Mammary epithelial cell (primary cell): ENCODE measurements at regions of chr17 and their contacts with region 1.

Region 1: GRCh38 chr17:41811549-41812380 is at the start of gene P3H4:
- DNase-seq: peak; percentile 79
- H3K4me3 ChIP-seq: peak within 1 kb of the TSS; percentile 66 to 81 (median 69)
- H3K27ac ChIP-seq: peak within 1 kb of the TSS; percentile 61
- H3K4me1 ChIP-seq: peaks cover 25% of the 10 kb centered on the region
- H3K27me3 ChIP-seq: no peaks in the 10 kb centered on the region
- CTCF ChIP-seq: peak; percentile 39 to 79
- total RNA-seq, gene P3H4: 30.5 to 42.3 TPM

Region 2: GRCh38 chr17:41717408-41718286 is 94.1 kb before region 1 on chr17:
- CTCF ChIA-PET with region 1: no interaction called
- dilution Hi-C with region 1: loop called (anchors 5 kb)
- in situ Hi-C with region 1: no loop called
- intact Hi-C with region 1: no loop called
- DNase-seq: peak; percentile 85
- H3K4me3 ChIP-seq: peak overlapping the region in 2 of 3 experiments; percentile 2 to 6
- H3K27ac ChIP-seq: peak overlapping the region; percentile 67
- H3K4me1 ChIP-seq: peaks cover 16% of the 10 kb centered on the region
- H3K27me3 ChIP-seq: no peaks in the 10 kb centered on the region
- CTCF ChIP-seq: no peak

Region 3: GRCh38 chr17:41786227-41787020 is 25.3 kb before region 1 on chr17 and contains the start of gene JUP:
- CTCF ChIA-PET with region 1: interaction called, 10 read pairs
- dilution Hi-C with region 1: no loop called
- in situ Hi-C with region 1: no loop called
- intact Hi-C with region 1: no loop called
- DNase-seq: peak; percentile 100
- H3K4me3 ChIP-seq: peak within 1 kb of the TSS; percentile 71 to 76 (median 75)
- H3K27ac ChIP-seq: peak within 1 kb of the TSS; percentile 99
- H3K4me1 ChIP-seq: peaks cover 47% of the 10 kb centered on the region
- H3K27me3 ChIP-seq: no peaks in the 10 kb centered on the region
- CTCF ChIP-seq: peak; percentile 43 to 49
- total RNA-seq, gene JUP: 444 to 578 TPM

Region 4: DNA sequence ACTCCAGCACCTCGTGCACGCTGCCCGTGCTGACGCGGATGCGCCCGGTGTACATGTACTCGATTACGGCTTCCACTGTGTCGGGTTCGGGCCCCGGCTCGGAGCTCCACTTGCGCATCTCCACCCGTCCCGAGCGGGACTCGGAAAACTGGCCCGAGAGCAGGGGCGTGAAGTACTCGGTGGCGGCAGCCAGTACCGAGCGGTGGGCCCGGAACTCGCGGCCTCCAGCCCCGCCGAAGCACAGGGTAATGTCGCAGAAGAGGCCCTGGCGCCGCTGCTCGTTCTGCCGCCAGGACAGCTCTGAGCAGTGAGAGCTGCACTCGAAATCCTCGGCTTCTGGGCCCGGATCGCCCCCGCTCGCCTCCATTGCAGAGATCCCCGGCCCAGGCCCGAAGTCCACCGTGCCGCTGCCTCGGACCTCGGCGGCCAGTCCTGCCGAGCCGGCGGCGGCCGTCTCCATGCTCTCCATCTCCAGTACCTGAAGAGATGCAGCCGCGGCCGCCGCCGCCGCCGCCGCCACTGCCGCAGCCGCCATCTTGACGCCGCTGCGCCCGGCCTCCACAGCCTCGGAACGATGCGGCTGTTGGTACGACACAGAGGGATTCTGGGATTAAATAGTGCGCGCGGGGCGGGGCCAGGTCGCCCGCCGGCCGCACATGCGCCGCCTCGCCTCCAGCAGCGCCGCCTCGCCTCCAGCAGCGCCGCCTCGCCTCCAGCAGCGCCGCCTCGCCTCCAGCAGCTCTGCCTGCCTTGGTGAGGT is 53.3 kb after region 1 on chr17 and contains the start of gene KLHL11:
- CTCF ChIA-PET with region 1: no interaction called
- dilution Hi-C with region 1: no loop called
- in situ Hi-C with region 1: no loop called
- intact Hi-C with region 1: loop called (anchors 2 kb)
- DNase-seq: peak; percentile 89
- H3K4me3 ChIP-seq: peak within 1 kb of the TSS; percentile 68 to 96 (median 75)
- H3K27ac ChIP-seq: peak within 1 kb of the TSS; percentile 50
- H3K4me1 ChIP-seq: peaks cover 7% of the 10 kb centered on the region
- H3K27me3 ChIP-seq: no peaks in the 10 kb centered on the region
- CTCF ChIP-seq: peak in 1 of 2 donors; percentile 4
- total RNA-seq, gene KLHL11: 14.5 to 43.2 TPM

Region 5: GRCh38 chr17:41918314-41919164 is 106.8 kb after region 1 on chr17 and contains the start of gene ACLY:
- CTCF ChIA-PET with region 1: no interaction called
- dilution Hi-C with region 1: no loop called
- in situ Hi-C with region 1: no loop called
- intact Hi-C with region 1: loop called (anchors 2 kb)
- DNase-seq: peak; percentile 97
- H3K4me3 ChIP-seq: peak within 1 kb of the TSS; percentile 83 to 96 (median 87)
- H3K27ac ChIP-seq: peak within 1 kb of the TSS; percentile 62
- H3K4me1 ChIP-seq: peaks cover 37% of the 10 kb centered on the region
- H3K27me3 ChIP-seq: no peaks in the 10 kb centered on the region
- CTCF ChIP-seq: no peak
- total RNA-seq, gene ACLY: 251 to 387 TPM